ENCODE measurements at regions of chr9 and their contacts with region 1.

Region 1: GRCh38 chr9:127437497-127438264 is 13.5 kb downstream of the ZNF79 start:
- DNase-seq: peak in 1 of 2 donors; percentile 42
- H3K4me3 ChIP-seq: no peak overlapping the region
- H3K27ac ChIP-seq: no peak overlapping the region
- H3K4me1 ChIP-seq: no peaks in the 10 kb centered on the region
- H3K27me3 ChIP-seq: no peaks in the 10 kb centered on the region
- CTCF ChIP-seq: no peak

Region 2: GRCh38 chr9:127406799-127407509 is 30.7 kb before region 1 on chr9:
- intact Hi-C with region 1: loop called (anchors 2 kb)
- DNase-seq: no peak
- H3K4me3 ChIP-seq: no peak overlapping the region
- H3K27ac ChIP-seq: no peak overlapping the region
- H3K4me1 ChIP-seq: no peaks in the 10 kb centered on the region
- H3K27me3 ChIP-seq: no peaks in the 10 kb centered on the region
- CTCF ChIP-seq: no peak

Measured in ascending aorta (tissue), 2 donors.